ENCODE measurements at regions of chr6 and their contacts with region 1.

Region 1: DNA sequence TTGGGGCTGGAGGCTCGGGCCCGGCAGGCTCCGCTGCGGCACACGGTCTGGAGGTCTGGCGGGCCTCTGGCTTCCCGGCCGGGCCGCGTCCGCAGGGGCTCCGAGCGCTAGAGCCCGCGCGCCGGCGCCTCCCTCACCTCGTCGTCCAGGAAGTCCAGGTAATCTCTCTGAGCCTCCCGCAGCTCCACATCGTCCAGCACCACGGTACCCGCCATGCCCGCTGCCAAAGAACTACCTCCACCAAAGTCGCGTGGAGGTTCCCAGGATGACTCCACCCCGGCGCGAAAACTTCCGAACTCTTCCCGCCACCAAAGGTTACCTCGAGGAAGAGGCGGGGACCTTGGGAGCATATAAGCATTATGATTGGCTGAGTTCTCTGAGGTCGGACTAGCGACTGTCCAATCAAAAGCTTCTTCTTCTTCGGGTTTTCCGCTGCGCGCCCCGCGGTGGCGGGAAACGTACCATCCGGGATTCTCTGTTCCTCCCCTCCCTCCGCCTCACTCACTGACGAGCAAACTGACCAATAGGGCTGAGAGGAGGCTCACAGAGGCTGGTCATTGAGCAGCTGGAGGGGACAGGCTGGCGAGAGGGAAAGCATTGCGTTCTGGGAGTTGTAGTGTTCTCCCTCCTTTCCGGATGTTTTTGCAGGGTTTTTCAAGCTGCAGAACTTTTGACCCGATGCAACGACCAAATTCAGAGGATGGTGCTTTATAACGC is at the start of gene MCM3:
- DNase-seq: peak; percentile 99
- H3K4me3 Mint-ChIP-seq: no peak within 1 kb of the TSS
- H3K27ac Mint-ChIP-seq: no peak within 1 kb of the TSS
- H3K4me1 Mint-ChIP-seq: peaks cover 56% of the 10 kb centered on the region
- H3K27me3 Mint-ChIP-seq: no peaks in the 10 kb centered on the region
- total RNA-seq, gene MCM3: 189 to 190 TPM

Region 2: GRCh38 chr6:52108128-52108527 is 176.5 kb before region 1 on chr6:
- CTCF ChIA-PET with region 1: no interaction called
- POLR2A ChIA-PET with region 1: no interaction called
- DNase-seq: no peak
- H3K4me3 Mint-ChIP-seq: no peak overlapping the region
- H3K27ac Mint-ChIP-seq: no peak overlapping the region
- H3K4me1 Mint-ChIP-seq: no peaks in the 10 kb centered on the region
- H3K27me3 Mint-ChIP-seq: peaks cover 9% of the 10 kb centered on the region

Region 3: GRCh38 chr6:52253494-52253893 is 31.1 kb before region 1 on chr6:
- CTCF ChIA-PET with region 1: no interaction called
- POLR2A ChIA-PET with region 1: no interaction called
- DNase-seq: peak; percentile 33
- H3K4me3 Mint-ChIP-seq: no peak overlapping the region
- H3K27ac Mint-ChIP-seq: no peak overlapping the region
- H3K4me1 Mint-ChIP-seq: peaks cover 38% of the 10 kb centered on the region
- H3K27me3 Mint-ChIP-seq: peaks cover 29% of the 10 kb centered on the region

Region 4: GRCh38 chr6:52304983-52305390 is 20.4 kb after region 1 on chr6:
- CTCF ChIA-PET with region 1: interaction called, 12 read pairs
- POLR2A ChIA-PET with region 1: no interaction called
- DNase-seq: no peak
- H3K4me3 Mint-ChIP-seq: peak overlapping the region; percentile 30
- H3K27ac Mint-ChIP-seq: peak overlapping the region; percentile 67
- H3K4me1 Mint-ChIP-seq: peaks cover 59% of the 10 kb centered on the region
- H3K27me3 Mint-ChIP-seq: no peaks in the 10 kb centered on the region

Region 5: DNA sequence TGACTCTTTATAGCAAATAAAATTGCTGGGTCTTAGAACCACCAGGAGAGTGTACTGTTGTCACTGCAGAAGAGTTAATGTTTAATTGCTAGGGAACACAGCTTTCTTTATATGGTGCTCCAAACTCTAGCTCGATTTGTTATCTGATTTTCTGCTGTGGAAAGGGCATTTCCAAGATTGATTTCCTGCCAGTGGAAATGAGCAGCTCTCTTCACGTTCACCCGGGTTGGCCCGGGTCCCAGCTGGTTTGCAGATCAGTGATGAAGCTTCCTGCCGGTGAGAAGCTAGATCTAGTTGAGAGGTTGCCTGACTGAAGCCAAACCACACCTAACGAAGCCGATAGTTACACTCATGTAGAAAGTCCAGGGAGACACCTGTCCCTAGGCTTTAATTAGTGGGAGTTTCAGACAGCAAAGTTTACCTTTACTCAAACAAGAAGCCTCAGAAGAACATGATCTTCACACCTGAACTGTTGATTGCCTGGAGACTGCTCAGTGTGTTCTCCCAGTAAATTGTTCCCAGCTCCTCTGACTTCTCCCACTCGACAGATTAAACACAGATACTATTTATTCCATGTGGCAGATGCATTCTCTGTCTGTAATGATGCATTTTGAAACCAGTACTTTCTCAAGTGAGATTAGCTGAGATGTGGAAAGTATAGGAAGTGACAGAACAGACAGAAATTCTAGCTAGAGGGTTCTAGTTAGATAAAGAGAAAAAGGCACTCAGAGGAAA is 105.2 kb after region 1 on chr6:
- CTCF ChIA-PET with region 1: interaction called, 22 read pairs
- POLR2A ChIA-PET with region 1: interaction called, 4 read pairs
- DNase-seq: peak; percentile 70
- H3K4me3 Mint-ChIP-seq: peak overlapping the region; percentile 65
- H3K27ac Mint-ChIP-seq: peak overlapping the region; percentile 95
- H3K4me1 Mint-ChIP-seq: peaks cover 77% of the 10 kb centered on the region
- H3K27me3 Mint-ChIP-seq: no peaks in the 10 kb centered on the region

Region 6: GRCh38 chr6:52399511-52400312 is 115.1 kb after region 1 on chr6:
- CTCF ChIA-PET with region 1: interaction called, 24 read pairs
- POLR2A ChIA-PET with region 1: interaction called, 5 read pairs
- DNase-seq: peak; percentile 52
- H3K4me3 Mint-ChIP-seq: no peak overlapping the region
- H3K27ac Mint-ChIP-seq: peak overlapping the region; percentile 93
- H3K4me1 Mint-ChIP-seq: peaks cover 60% of the 10 kb centered on the region
- H3K27me3 Mint-ChIP-seq: no peaks in the 10 kb centered on the region

Region 7: DNA sequence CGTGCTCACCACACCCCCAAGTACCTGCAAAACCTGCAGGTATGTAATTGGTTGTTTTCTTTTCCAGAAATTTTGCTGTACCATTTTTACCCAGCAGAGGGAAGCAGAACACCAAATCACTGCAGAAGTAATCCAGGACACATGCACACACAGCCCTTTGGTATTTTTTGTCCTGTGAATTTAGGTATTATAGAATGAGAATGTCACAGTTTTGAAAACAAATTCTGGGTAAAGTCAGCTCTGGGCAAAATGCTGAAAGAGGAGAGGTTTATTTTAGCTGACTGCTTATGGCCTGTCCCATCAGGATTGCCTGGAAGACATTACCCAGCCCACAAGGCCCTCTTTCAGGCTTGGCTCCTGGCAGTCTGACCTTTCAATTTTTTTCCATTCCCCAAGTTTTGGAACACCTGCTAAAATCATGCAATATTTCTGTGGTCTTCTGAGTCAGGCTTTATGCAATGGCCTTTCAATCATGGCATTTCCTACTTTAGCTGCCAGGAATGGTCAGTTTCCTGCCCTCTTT is 132.1 kb after region 1 on chr6:
- CTCF ChIA-PET with region 1: interaction called, 13 read pairs
- POLR2A ChIA-PET with region 1: interaction called, 3 read pairs
- DNase-seq: peak; percentile 73
- H3K4me3 Mint-ChIP-seq: no peak overlapping the region
- H3K27ac Mint-ChIP-seq: peak overlapping the region; percentile 42
- H3K4me1 Mint-ChIP-seq: peaks cover 28% of the 10 kb centered on the region
- H3K27me3 Mint-ChIP-seq: peaks cover 2% of the 10 kb centered on the region